PC-3 (cell line): ENCODE measurements at regions of chr7 and their contacts with region 1.

Region 1: GRCh38 chr7:7968543-7969305 is at the start of gene GLCCI1:
- DNase-seq: peak; percentile 96
- ATAC-seq: peak; percentile 87
- H3K4me3 ChIP-seq: peak within 1 kb of the TSS; percentile 88
- H3K27ac ChIP-seq: peak within 1 kb of the TSS; percentile 70
- H3K4me1 ChIP-seq: peaks cover 35% of the 10 kb centered on the region
- H3K27me3 ChIP-seq: no peaks in the 10 kb centered on the region
- CTCF ChIP-seq: no peak
- total RNA-seq, gene GLCCI1: 7.8 and 8.5 TPM in 2 replicates

Region 2: DNA sequence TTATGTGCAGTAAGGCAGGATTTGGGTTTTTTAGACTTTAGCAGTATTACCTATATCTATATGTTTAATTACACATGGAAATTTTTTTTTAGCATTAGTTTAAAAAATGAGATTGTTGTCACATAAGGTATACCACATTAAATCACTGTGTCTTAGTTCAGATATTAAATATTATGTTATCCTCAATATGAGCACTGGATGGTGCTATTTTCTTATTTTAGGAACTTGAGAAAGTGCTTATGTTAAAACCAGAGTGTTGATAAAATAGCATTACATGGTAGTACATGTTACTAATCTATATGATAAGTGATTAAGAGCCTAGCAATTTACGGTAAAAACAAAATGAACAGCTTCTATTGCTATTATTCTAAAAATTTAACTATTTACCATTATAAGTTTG is 373.3 kb before region 1 on chr7:
- CTCF ChIA-PET with region 1: no interaction called
- POLR2A ChIA-PET with region 1: no interaction called
- intact Hi-C with region 1: loop called (anchors 10 kb)
- DNase-seq: peak; percentile 62
- ATAC-seq: peak; percentile 61
- H3K4me3 ChIP-seq: no peak overlapping the region
- H3K27ac ChIP-seq: no peak overlapping the region
- H3K4me1 ChIP-seq: no peaks in the 10 kb centered on the region
- H3K27me3 ChIP-seq: no peaks in the 10 kb centered on the region
- CTCF ChIP-seq: peak; percentile 63

Region 3: DNA sequence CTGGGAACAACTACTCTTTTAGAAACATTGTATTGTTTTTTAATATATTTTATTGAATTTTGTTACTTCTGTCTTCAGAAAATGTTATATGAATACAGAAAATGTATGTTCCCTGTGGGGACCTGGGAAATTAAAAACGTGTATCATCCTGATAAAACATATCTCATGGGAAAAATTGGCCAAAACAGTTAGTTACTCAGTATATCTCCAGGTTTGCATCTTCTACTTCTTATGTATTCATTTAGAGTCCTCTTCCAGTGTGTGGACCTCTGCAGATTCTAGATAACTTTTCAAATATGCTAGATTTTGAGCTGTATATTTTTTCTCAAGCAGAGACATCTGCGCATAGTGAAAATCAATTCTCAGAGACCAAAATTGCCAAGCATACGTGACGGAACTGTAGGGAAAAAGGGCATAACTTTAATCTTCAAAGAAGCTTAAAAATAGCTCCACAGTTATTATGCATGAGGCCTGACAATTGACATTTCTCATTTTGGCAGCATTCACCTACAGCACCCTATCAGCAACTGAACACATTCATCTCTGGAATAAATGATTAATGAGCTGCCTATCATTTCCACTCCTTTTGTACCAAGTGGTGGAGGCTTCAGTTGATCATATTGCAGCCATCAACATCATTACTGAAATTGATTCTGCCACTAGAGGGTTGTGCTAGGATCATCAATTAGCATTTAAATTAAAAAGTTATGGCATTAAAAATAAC is 354.5 kb before region 1 on chr7:
- CTCF ChIA-PET with region 1: no interaction called
- POLR2A ChIA-PET with region 1: no interaction called
- intact Hi-C with region 1: no loop called
- DNase-seq: no peak
- ATAC-seq: no peak
- H3K4me3 ChIP-seq: no peak overlapping the region
- H3K27ac ChIP-seq: no peak overlapping the region
- H3K4me1 ChIP-seq: no peaks in the 10 kb centered on the region
- H3K27me3 ChIP-seq: no peaks in the 10 kb centered on the region
- CTCF ChIP-seq: no peak

Region 4: GRCh38 chr7:7681179-7681935 is 287.4 kb before region 1 on chr7:
- CTCF ChIA-PET with region 1: no interaction called
- POLR2A ChIA-PET with region 1: no interaction called
- intact Hi-C with region 1: loop called (anchors 5 kb)
- DNase-seq: peak; percentile 80
- ATAC-seq: peak; percentile 93
- H3K4me3 ChIP-seq: peak overlapping the region; percentile 16; the same call in 1 of the 2 replicates
- H3K27ac ChIP-seq: no peak overlapping the region
- H3K4me1 ChIP-seq: peaks cover 11% of the 10 kb centered on the region
- H3K27me3 ChIP-seq: no peaks in the 10 kb centered on the region
- CTCF ChIP-seq: peak; percentile 81

Region 5: DNA sequence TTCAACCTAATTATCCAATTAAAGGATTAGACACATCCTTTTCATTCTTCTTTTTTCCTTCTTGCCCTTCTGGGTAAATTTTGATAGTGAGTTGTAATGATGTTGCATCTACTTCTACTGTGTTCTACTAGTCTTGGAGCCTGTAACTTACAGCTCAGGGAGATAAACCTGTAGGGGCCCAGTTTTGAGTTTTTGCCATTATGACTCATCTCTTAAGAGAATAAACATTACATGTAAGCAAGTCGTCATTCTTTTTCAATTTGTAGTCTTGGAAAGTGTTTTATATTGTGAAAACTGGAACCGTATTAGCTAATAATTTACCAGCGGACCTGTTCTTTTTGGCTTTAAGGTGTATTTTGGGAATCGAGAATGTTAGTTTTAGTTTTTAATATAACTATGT is 160.6 kb before region 1 on chr7:
- CTCF ChIA-PET with region 1: no interaction called
- POLR2A ChIA-PET with region 1: interaction called, 4 read pairs
- intact Hi-C with region 1: loop called (anchors 1 kb)
- DNase-seq: peak; percentile 88
- ATAC-seq: peak; percentile 94
- H3K4me3 ChIP-seq: no peak overlapping the region; the same call in 1 of the 2 replicates
- H3K27ac ChIP-seq: no peak overlapping the region
- H3K4me1 ChIP-seq: peaks cover 15% of the 10 kb centered on the region
- H3K27me3 ChIP-seq: no peaks in the 10 kb centered on the region
- CTCF ChIP-seq: no peak

Region 6: GRCh38 chr7:7982904-7983303 is 14.2 kb after region 1 on chr7:
- CTCF ChIA-PET with region 1: no interaction called
- POLR2A ChIA-PET with region 1: interaction called, 3 read pairs
- intact Hi-C with region 1: loop called (anchors 1 kb)
- DNase-seq: peak; percentile 61
- ATAC-seq: peak; percentile 90
- H3K4me3 ChIP-seq: no peak overlapping the region
- H3K27ac ChIP-seq: peak overlapping the region; percentile 24; the same call in 1 of the 2 replicates
- H3K4me1 ChIP-seq: peaks cover 20% of the 10 kb centered on the region
- H3K27me3 ChIP-seq: no peaks in the 10 kb centered on the region
- CTCF ChIP-seq: no peak

Region 7: GRCh38 chr7:8035647-8036518 is 67.2 kb after region 1 on chr7:
- CTCF ChIA-PET with region 1: interaction called, 5 read pairs
- POLR2A ChIA-PET with region 1: no interaction called
- intact Hi-C with region 1: loop called (anchors 1 kb)
- DNase-seq: peak; percentile 41
- ATAC-seq: peak; percentile 95
- H3K4me3 ChIP-seq: no peak overlapping the region
- H3K27ac ChIP-seq: no peak overlapping the region
- H3K4me1 ChIP-seq: 0 out of 2 replicates have a peak, but pooled peaks cover 8% of the 10 kb centered on the region
- H3K27me3 ChIP-seq: no peaks in the 10 kb centered on the region
- CTCF ChIP-seq: peak; percentile 74

Region 8: GRCh38 chr7:8134089-8134733 is 165.5 kb after region 1 on chr7:
- CTCF ChIA-PET with region 1: no interaction called
- POLR2A ChIA-PET with region 1: no interaction called
- intact Hi-C with region 1: no loop called
- DNase-seq: peak; percentile 12
- ATAC-seq: no peak
- H3K4me3 ChIP-seq: no peak overlapping the region
- H3K27ac ChIP-seq: no peak overlapping the region
- H3K4me1 ChIP-seq: no peaks in the 10 kb centered on the region
- H3K27me3 ChIP-seq: no peaks in the 10 kb centered on the region
- CTCF ChIP-seq: no peak

Region 9: DNA sequence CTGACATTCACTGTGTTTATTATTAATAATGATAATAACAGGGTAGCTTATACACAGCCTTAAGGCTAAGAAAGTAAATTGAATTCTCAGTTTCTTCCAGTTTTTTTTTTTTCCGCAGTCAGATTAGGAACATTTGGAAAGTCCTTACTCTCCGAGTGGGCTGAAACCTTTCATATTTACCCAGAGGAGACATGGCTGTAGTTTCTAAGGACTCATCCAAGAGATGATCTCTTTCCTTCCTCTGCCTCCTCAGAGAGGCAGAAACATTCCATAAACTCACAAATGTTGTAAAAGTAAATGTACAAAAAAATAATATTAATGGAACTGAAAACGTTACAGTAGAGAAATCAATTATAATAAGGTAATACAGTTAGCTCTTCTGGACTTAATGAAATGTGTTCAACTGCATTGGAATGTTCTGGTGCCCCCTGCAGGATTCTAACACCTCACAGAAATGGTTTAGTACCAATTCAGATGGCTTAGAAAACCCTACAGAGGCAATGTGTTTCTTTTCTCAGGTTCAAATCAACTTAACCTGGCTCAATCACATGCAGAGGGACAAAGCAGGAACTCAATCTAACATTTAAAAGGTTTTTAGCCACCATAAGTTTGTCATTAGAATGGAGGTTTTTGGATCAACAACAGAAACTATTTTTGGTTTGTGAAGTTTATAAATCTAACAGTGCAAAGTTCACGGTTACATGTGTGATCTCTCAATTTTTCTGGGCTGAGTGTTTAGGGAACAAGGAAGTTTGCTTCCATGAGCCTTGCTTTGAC is 221.6 kb after region 1 on chr7:
- CTCF ChIA-PET with region 1: no interaction called
- POLR2A ChIA-PET with region 1: no interaction called
- intact Hi-C with region 1: loop called (anchors 1 kb)
- DNase-seq: peak; percentile 66
- ATAC-seq: peak; percentile 84
- H3K4me3 ChIP-seq: no peak overlapping the region
- H3K27ac ChIP-seq: no peak overlapping the region
- H3K4me1 ChIP-seq: no peaks in the 10 kb centered on the region
- H3K27me3 ChIP-seq: no peaks in the 10 kb centered on the region
- CTCF ChIP-seq: peak; percentile 83